ENCODE measurements at regions of chr10 and their contacts with region 1.

Region 1: GRCh38 chr10:45532480-45532879 is 140.1 kb downstream of the ZFAND4 start:
- DNase-seq: peak in 1 of 2 donors; percentile 13
- ATAC-seq: no peak
- H3K4me3 ChIP-seq: no peak overlapping the region
- H3K27ac ChIP-seq: no peak overlapping the region
- H3K4me1 ChIP-seq: peaks cover 7 to 14% of the 10 kb centered on the region in 2 donors
- H3K27me3 ChIP-seq: no peaks in the 10 kb centered on the region
- CTCF ChIP-seq: no peak
- POLR2A ChIP-seq: no peak

Region 2: DNA sequence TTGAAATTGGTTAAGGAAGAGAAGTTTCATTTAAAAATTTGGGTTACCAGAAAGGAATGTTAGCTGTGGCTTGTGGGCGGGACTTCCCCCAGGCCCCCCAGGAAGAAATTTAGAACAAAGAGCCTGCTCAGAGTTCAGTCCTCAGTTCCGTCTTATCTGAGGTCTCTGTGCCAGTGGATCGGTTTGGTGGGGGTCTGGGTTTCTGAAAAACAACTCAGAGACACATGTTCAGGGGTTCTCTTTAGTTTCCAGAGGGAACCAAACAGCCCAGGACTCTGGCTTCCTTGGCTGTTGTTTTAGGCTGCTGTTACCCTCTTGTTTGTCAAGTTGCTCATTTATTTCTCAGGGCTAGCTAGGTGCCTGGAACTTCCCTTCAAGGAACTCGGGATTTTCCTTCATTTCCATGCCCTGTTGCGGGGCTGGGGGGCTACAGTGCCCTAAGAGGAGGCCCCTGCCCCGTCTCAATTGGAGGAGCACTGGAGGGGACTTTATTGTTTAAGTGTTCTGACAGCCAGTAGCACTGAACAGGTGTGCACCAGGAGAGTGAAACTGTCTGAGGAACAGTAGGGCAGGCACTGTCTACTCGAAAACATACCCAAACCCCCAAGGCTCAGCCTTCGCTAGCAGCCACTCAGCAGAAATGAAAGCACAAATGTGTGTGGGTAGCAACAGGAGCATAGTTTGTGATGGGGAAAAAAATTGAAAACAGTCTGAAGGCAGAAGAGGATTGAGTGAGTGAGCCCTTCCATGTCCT is 98.6 kb before region 1 on chr10:
- in situ Hi-C with region 1: loop called in 1 of 4 experiments (anchors 25 kb)
- intact Hi-C with region 1: no loop called
- DNase-seq: no peak
- ATAC-seq: no peak
- H3K4me3 ChIP-seq: no peak overlapping the region
- H3K27ac ChIP-seq: no peak overlapping the region
- H3K4me1 ChIP-seq: no peaks in the 10 kb centered on the region
- H3K27me3 ChIP-seq: peaks cover 0 to 4% (median 3%) of the 10 kb centered on the region in 3 donors
- CTCF ChIP-seq: no peak
- POLR2A ChIP-seq: no peak

Region 3: DNA sequence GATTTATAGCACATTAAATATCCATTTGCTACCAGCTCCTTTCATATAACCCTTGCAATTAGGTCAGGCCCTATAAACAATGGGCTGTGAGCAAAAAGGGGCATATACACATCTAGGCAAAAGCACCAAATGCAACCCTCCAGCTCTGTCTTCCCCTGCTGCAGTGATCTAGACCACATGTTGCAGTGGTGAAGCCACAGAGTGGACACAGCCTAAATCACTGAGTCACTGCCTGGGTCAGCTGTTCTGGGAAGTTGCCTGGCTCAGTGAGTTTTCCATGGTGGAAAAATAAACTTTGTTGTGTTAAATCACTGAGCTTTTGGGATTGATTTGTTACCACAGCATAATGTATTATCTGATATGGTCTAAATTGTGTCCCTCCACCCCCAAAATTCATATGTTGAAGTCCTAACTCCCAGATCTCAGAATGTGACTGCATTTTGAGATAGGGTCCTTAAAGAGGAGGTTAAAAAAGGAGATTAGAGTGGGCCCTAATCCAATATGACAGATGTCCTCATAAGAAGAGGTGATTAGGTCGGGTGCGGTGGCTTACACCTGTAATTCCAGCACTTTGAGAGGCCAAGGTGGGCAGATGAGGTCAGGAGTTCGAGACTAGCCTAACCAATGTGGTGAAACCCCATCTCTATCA is 69.7 kb after region 1 on chr10:
- in situ Hi-C with region 1: no loop called
- intact Hi-C with region 1: no loop called
- DNase-seq: no peak
- ATAC-seq: no peak
- H3K4me3 ChIP-seq: no peak overlapping the region
- H3K27ac ChIP-seq: no peak overlapping the region
- H3K4me1 ChIP-seq: no peaks in the 10 kb centered on the region
- H3K27me3 ChIP-seq: peaks cover 8 to 24% (median 22%) of the 10 kb centered on the region in 3 donors
- CTCF ChIP-seq: no peak
- POLR2A ChIP-seq: no peak